Prostate gland (tissue), 2 donors: ENCODE measurements at regions of chr9 and their contacts with region 1.

Region 1: DNA sequence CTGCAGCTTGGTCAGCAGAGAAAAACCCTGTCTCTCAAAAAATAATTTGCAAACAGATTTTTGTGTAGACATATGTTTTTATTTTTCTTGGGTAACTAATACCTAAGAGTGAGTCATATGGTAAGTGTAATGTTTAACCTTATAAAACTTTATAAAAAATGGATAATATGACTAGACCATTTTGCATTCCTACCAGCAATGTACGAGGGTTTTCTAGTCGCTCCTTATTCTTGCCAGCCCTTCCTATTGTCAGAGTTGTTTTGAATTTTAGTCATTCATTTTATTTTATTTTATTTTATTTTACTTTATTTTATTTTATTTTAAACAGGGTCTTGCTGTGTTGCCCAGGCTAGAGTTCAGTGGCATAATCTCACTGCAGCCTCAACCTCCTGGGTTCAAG is 37.8 kb downstream of the RABGAP1 start:
- DNase-seq: no peak
- H3K4me3 ChIP-seq: no peak overlapping the region
- H3K27ac ChIP-seq: no peak overlapping the region
- H3K4me1 ChIP-seq: no peaks in the 10 kb centered on the region
- H3K27me3 ChIP-seq: no peaks in the 10 kb centered on the region
- CTCF ChIP-seq: no peak
- POLR2A ChIP-seq: no peak

Region 2: DNA sequence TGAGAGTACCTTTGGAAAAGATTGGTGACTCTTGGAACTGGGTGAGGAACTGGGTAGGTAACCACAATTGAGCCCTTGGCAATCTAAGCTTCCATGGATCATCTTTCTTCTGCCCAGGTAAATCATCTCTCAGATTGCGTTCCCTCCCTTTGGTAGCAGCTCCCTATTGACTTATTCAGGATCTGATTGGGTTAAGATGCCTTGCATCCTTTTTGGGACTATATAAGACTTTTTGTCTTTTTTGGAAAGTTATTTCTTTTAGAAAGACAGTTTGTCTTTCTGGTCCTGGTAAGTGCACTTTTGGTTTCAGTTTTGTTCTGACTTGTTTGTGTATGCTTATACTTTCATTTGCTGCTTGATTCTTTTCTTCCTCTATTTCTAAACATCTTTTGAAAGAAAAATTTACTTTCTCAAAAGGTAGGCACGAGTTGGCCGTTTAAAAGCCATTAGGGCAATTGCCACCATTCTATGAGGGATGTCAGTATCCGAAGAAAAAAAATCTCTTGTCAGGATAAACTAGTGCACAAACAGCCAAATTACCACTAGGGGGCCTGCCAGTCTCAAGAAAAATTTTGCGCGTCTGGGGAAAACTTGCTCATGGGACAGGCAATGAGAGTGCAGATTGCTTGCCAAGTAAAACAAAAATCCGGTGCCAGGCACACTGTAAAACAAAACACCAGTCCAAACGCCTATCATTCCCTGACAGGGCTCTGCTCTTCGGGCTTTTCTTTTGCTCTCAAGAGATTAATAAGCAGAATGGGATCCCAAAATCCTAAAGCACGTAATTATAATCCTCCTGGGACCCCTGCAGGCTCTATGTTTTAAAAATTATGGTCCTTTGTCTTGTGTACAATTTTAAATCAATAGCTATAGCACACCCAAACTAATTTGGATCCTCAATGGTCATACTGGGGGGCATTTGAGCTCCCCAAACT is 513.7 kb before region 1 on chr9:
- intact Hi-C with region 1: loop called (anchors 10 kb)
- DNase-seq: peak; percentile 92
- H3K4me3 ChIP-seq: peak overlapping the region; percentile 17 to 18
- H3K27ac ChIP-seq: peak overlapping the region in 1 of 2 donors; percentile 21
- H3K4me1 ChIP-seq: no peaks in the 10 kb centered on the region
- H3K27me3 ChIP-seq: no peaks in the 10 kb centered on the region
- CTCF ChIP-seq: peak; percentile 48 to 96 (median 90)
- POLR2A ChIP-seq: no peak

Region 3: GRCh38 chr9:123749580-123750202 is 771.1 kb after region 1 on chr9:
- intact Hi-C with region 1: no loop called
- DNase-seq: no peak
- H3K4me3 ChIP-seq: no peak overlapping the region
- H3K27ac ChIP-seq: no peak overlapping the region
- H3K4me1 ChIP-seq: no peaks in the 10 kb centered on the region
- H3K27me3 ChIP-seq: no peaks in the 10 kb centered on the region
- CTCF ChIP-seq: no peak
- POLR2A ChIP-seq: no peak